ENCODE measurements at regions of chr6 and their contacts with region 1.

Region 1: GRCh38 chr6:53171605-53172446 is 23.2 kb upstream of the GCM1 start:
- DNase-seq: peak; percentile 73
- ATAC-seq: peak; percentile 100
- H3K4me3 ChIP-seq: no peak overlapping the region
- H3K27ac ChIP-seq: no peak overlapping the region
- H3K4me1 ChIP-seq: peaks cover 4% of the 10 kb centered on the region; the same call in 1 of the 2 replicates
- H3K27me3 ChIP-seq: no peaks in the 10 kb centered on the region; the same call in 1 of the 2 replicates
- CTCF ChIP-seq: peak; percentile 100
- POLR2A ChIP-seq: peak; percentile 70
- RAD21 ChIP-seq: peak; percentile 100

Region 2: GRCh38 chr6:53348371-53349208 is 176.8 kb after region 1 on chr6 and contains the start of gene ELOVL5:
- CTCF ChIA-PET with region 1: no interaction called
- POLR2A ChIA-PET with region 1: no interaction called
- dilution Hi-C with region 1: no loop called
- in situ Hi-C with region 1: no loop called
- intact Hi-C with region 1: loop called (anchors 5 kb)
- DNase-seq: peak; percentile 98
- ATAC-seq: peak; percentile 65
- H3K4me3 ChIP-seq: peak within 1 kb of the TSS; percentile 95
- H3K27ac ChIP-seq: peak within 1 kb of the TSS; percentile 91
- H3K4me1 ChIP-seq: 0 out of 2 replicates have a peak, but pooled peaks cover 1% of the 10 kb centered on the region
- H3K27me3 ChIP-seq: peaks cover 3% of the 10 kb centered on the region; the same call in 1 of the 2 replicates
- CTCF ChIP-seq: no peak
- POLR2A ChIP-seq: peak; percentile 84
- RAD21 ChIP-seq: no peak
- total RNA-seq, gene ELOVL5: 42.3 and 50.5 TPM in 2 replicates

Region 3: GRCh38 chr6:53437557-53438202 is 265.9 kb after region 1 on chr6:
- CTCF ChIA-PET with region 1: interaction called, 6 read pairs
- POLR2A ChIA-PET with region 1: no interaction called
- dilution Hi-C with region 1: no loop called
- in situ Hi-C with region 1: no loop called
- intact Hi-C with region 1: loop called (anchors 1 kb)
- DNase-seq: peak; percentile 91
- ATAC-seq: peak; percentile 90
- H3K4me3 ChIP-seq: no peak overlapping the region
- H3K27ac ChIP-seq: no peak overlapping the region
- H3K4me1 ChIP-seq: peaks cover 10% of the 10 kb centered on the region
- H3K27me3 ChIP-seq: no peaks in the 10 kb centered on the region
- CTCF ChIP-seq: peak; percentile 93
- POLR2A ChIP-seq: no peak
- RAD21 ChIP-seq: peak; percentile 83

Region 4: DNA sequence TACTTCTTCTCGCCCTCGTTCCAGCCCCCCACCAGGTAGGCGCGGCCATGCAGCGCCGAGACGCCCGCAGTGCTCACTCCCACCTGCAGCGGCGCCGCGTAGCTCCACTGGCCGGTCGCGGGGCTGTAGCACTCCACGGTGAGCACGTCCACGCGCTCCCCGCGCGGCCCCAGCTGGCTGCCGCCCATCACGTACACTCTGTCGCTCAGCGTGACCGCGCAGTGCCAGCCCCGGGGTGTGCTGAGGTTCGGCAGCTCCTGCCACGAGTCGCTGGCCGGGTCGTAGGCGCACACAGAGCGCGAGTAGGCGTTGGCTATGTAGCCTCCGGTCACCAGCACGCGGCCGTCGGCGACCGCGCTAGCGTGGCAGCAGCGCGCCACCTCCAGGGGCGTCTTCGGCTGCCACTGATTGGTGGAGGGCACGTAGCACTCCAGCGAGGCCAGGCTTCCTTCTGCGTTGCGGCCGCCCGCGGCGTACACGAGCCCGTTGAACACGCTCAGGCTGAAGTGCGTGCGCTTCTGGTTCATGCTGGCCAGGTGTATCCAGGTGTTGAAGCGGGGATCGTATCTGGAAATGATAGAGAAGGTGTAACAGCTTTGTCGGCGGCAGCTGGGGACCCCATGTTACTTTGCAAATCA is 480.1 kb after region 1 on chr6:
- CTCF ChIA-PET with region 1: no interaction called
- POLR2A ChIA-PET with region 1: no interaction called
- dilution Hi-C with region 1: no loop called
- in situ Hi-C with region 1: loop called (anchors 25 kb)
- intact Hi-C with region 1: no loop called
- DNase-seq: peak; percentile 44
- ATAC-seq: peak; percentile 89
- H3K4me3 ChIP-seq: peak overlapping the region; percentile 78
- H3K27ac ChIP-seq: no peak overlapping the region; the same call in 1 of the 2 replicates
- H3K4me1 ChIP-seq: peaks cover 1% of the 10 kb centered on the region; the same call in 1 of the 2 replicates
- H3K27me3 ChIP-seq: peaks cover 10% of the 10 kb centered on the region; the same call in 1 of the 2 replicates
- CTCF ChIP-seq: 0 out of 2 replicates have a peak, but pooled peaks have one; percentile 20
- POLR2A ChIP-seq: no peak
- RAD21 ChIP-seq: no peak

Region 5: DNA sequence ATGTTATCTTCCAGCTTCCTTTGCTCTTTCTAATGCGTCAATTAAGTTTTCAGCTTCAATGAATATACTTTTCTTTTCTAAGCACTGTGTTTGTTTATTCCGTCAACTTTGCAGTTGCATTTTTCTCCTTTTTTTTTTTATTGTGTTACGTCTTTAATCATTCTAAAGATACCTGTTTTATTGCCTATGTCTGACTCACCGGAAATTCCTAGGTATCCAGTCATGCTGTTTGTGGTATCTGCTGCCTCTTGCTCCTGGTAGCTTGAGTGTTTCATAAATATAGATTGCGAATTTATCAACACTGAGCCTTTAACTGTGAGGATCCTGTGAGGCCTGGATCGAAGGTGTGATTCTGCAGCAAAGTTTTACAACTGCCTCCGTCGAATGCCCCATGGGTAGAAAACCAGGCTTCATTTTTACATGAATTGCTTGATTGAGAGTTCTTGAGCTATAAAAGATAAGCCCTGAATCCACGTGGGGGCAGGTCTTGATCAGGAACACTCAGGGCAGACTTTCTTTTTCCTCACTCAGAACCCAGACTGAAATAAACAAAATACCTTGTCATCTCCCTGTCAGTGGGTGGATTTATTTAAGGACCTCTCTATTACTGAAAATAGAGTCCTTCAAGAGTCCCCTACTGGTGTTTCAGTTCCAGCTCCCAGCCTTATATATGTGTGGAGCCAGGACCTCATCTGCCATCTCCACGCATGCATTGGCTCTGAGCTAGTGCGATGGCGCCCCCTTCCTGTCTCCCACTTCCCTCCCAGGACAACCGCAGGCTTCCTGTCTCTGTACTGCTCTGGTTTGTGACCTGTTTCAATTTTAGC is 562.9 kb after region 1 on chr6:
- CTCF ChIA-PET with region 1: no interaction called
- POLR2A ChIA-PET with region 1: no interaction called
- dilution Hi-C with region 1: no loop called
- in situ Hi-C with region 1: loop called (anchors 10 kb)
- intact Hi-C with region 1: loop called (anchors 5 kb)
- DNase-seq: peak; percentile 78
- ATAC-seq: peak; percentile 74
- H3K4me3 ChIP-seq: no peak overlapping the region
- H3K27ac ChIP-seq: no peak overlapping the region
- H3K4me1 ChIP-seq: peaks cover 7% of the 10 kb centered on the region
- H3K27me3 ChIP-seq: no peaks in the 10 kb centered on the region
- CTCF ChIP-seq: peak; percentile 37
- POLR2A ChIP-seq: no peak
- RAD21 ChIP-seq: no peak

Measured in IMR-90 (cell line).